ENCODE measurements at regions of chr14 and their contacts with region 1.

Region 1: DNA sequence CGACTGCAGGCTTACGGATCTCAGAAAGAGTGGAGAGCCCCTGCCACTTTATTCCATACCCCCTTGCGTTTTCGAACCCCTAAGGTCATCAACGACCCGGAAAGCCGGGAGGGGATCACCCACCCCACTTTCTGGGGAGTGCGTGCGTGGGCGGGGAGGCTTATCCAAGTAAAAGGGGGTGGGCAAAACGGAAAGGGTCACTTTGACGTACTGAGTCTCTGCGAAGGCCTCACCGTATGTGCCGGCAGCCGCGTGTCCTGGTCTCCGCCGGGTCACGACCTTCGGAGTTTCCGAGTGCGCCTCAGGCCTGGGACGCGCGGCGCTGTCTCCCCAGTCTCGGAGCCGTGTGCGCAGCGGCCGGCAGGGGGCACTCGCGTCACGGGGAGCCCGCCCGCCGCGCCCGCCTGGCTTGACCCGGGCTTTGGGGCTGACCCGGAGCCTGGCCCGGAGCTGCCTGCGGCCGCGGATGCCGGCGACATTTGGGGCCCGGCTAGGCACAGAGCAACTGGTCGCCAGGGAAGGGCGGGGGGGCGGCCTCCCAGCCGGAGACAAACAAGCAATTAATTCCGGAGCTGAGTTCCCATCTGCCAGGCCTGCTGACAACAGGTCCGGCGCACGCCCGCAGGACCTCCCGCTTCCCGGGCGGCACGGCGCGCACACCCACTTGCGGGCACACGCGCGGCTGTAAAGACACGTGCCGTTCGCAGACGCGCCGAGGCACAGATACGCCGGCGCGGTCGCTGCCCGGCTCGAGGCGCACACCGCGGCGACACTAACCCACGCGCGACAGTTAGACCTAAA is 890 bp upstream of the KIF26A start:
- DNase-seq: no peak
- H3K4me3 ChIP-seq: peak overlapping the region; percentile 26 to 49 (median 31)
- H3K27ac ChIP-seq: no peak overlapping the region
- H3K4me1 ChIP-seq: peaks cover 4% of the 10 kb centered on the region
- H3K27me3 ChIP-seq: peaks cover 59% of the 10 kb centered on the region
- CTCF ChIP-seq: peak; percentile 55 to 91 (median 77)

Region 2: GRCh38 chr14:103746701-103747100 is 390.8 kb before region 1 on chr14:
- dilution Hi-C with region 1: no loop called
- DNase-seq: no peak
- H3K4me3 ChIP-seq: no peak overlapping the region
- H3K27ac ChIP-seq: no peak overlapping the region
- H3K4me1 ChIP-seq: no peaks in the 10 kb centered on the region
- H3K27me3 ChIP-seq: no peaks in the 10 kb centered on the region
- CTCF ChIP-seq: no peak

Region 3: GRCh38 chr14:104048758-104049507 is 88.6 kb before region 1 on chr14:
- dilution Hi-C with region 1: loop called (anchors 25 kb)
- DNase-seq: no peak
- H3K4me3 ChIP-seq: no peak overlapping the region
- H3K27ac ChIP-seq: no peak overlapping the region
- H3K4me1 ChIP-seq: no peaks in the 10 kb centered on the region
- H3K27me3 ChIP-seq: peaks cover 5% of the 10 kb centered on the region
- CTCF ChIP-seq: no peak

Measured in keratinocyte (primary cell).